ENCODE measurements at regions of chr12 and their contacts with region 1.

Region 1: GRCh38 chr12:121550974-121551634 is 29.7 kb downstream of the KDM2B start:
- DNase-seq: no peak
- ATAC-seq: no peak
- H3K4me3 Mint-ChIP-seq: no peak overlapping the region
- H3K27ac Mint-ChIP-seq: no peak overlapping the region
- H3K4me1 Mint-ChIP-seq: peaks cover 24% of the 10 kb centered on the region
- H3K27me3 Mint-ChIP-seq: no peaks in the 10 kb centered on the region
- CTCF ChIP-seq: no peak

Region 2: DNA sequence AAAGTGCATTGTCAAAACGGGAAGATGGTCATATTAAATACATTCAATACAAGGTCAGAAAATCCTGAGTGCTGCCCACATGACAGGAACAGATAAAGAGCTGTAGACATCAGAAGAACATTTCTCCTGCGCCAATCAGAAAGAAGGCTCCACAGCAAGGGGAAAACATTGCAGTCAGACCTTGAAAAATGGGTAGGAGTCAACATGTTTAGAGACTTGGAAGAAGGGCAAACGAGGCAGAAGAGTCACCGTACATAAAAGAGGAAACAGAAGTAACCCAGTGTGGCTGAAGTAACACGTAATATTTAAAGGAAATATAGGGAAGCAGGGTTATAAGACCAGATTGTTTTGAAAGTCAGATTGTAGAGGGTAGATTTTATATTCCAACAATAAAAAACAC is 658.8 kb before region 1 on chr12:
- CTCF ChIA-PET with region 1: no interaction called
- POLR2A ChIA-PET with region 1: no interaction called
- intact Hi-C with region 1: no loop called
- DNase-seq: no peak
- ATAC-seq: no peak
- H3K4me3 Mint-ChIP-seq: no peak overlapping the region
- H3K27ac Mint-ChIP-seq: peak overlapping the region; percentile 47
- H3K4me1 Mint-ChIP-seq: peaks cover 42% of the 10 kb centered on the region
- H3K27me3 Mint-ChIP-seq: no peaks in the 10 kb centered on the region
- CTCF ChIP-seq: no peak

Region 3: GRCh38 chr12:121579981-121580868 is 29.1 kb after region 1 on chr12:
- CTCF ChIA-PET with region 1: interaction called, 12 read pairs
- POLR2A ChIA-PET with region 1: interaction called, 232 read pairs
- intact Hi-C with region 1: no loop called
- DNase-seq: peak; percentile 60
- ATAC-seq: peak; percentile 52
- H3K4me3 Mint-ChIP-seq: peak overlapping the region; percentile 95
- H3K27ac Mint-ChIP-seq: peak overlapping the region; percentile 95
- H3K4me1 Mint-ChIP-seq: peaks cover 45% of the 10 kb centered on the region
- H3K27me3 Mint-ChIP-seq: no peaks in the 10 kb centered on the region
- CTCF ChIP-seq: no peak

Region 4: GRCh38 chr12:121668750-121669520 is 117.8 kb after region 1 on chr12:
- CTCF ChIA-PET with region 1: interaction called, 158 read pairs
- POLR2A ChIA-PET with region 1: interaction called, 50 read pairs
- intact Hi-C with region 1: loop called (anchors 1 kb)
- DNase-seq: peak; percentile 38
- ATAC-seq: no peak
- H3K4me3 Mint-ChIP-seq: no peak overlapping the region
- H3K27ac Mint-ChIP-seq: peak overlapping the region; percentile 14
- H3K4me1 Mint-ChIP-seq: peaks cover 49% of the 10 kb centered on the region
- H3K27me3 Mint-ChIP-seq: no peaks in the 10 kb centered on the region
- CTCF ChIP-seq: no peak

Region 5: DNA sequence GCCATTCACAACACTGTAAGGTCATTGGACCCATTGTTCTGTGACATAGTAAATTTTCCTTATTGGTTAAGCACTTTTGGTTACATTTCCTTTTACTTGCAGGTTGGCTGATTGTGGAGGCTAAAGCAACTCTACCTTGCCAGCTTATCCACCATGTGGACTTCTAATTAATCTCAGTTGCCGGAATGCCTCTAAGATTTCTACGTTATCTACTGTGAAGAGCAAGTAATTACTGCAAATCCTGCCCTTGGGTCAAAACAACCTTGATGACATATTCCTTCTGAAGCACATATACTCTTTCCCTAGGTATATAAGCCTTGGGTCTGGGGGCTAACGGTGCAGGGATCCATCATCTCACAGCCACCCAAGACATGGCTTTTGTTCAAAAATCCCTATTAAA is 137.9 kb after region 1 on chr12:
- CTCF ChIA-PET with region 1: interaction called, 71 read pairs
- POLR2A ChIA-PET with region 1: interaction called, 10 read pairs
- intact Hi-C with region 1: no loop called
- DNase-seq: no peak
- ATAC-seq: no peak
- H3K4me3 Mint-ChIP-seq: no peak overlapping the region
- H3K27ac Mint-ChIP-seq: no peak overlapping the region
- H3K4me1 Mint-ChIP-seq: peaks cover 7% of the 10 kb centered on the region
- H3K27me3 Mint-ChIP-seq: no peaks in the 10 kb centered on the region
- CTCF ChIP-seq: no peak

Region 6: GRCh38 chr12:121729021-121729420 is 177.9 kb after region 1 on chr12:
- CTCF ChIA-PET with region 1: no interaction called
- POLR2A ChIA-PET with region 1: no interaction called
- intact Hi-C with region 1: no loop called
- DNase-seq: no peak
- ATAC-seq: no peak
- H3K4me3 Mint-ChIP-seq: no peak overlapping the region
- H3K27ac Mint-ChIP-seq: no peak overlapping the region
- H3K4me1 Mint-ChIP-seq: no peaks in the 10 kb centered on the region
- H3K27me3 Mint-ChIP-seq: no peaks in the 10 kb centered on the region
- CTCF ChIP-seq: no peak

Region 7: DNA sequence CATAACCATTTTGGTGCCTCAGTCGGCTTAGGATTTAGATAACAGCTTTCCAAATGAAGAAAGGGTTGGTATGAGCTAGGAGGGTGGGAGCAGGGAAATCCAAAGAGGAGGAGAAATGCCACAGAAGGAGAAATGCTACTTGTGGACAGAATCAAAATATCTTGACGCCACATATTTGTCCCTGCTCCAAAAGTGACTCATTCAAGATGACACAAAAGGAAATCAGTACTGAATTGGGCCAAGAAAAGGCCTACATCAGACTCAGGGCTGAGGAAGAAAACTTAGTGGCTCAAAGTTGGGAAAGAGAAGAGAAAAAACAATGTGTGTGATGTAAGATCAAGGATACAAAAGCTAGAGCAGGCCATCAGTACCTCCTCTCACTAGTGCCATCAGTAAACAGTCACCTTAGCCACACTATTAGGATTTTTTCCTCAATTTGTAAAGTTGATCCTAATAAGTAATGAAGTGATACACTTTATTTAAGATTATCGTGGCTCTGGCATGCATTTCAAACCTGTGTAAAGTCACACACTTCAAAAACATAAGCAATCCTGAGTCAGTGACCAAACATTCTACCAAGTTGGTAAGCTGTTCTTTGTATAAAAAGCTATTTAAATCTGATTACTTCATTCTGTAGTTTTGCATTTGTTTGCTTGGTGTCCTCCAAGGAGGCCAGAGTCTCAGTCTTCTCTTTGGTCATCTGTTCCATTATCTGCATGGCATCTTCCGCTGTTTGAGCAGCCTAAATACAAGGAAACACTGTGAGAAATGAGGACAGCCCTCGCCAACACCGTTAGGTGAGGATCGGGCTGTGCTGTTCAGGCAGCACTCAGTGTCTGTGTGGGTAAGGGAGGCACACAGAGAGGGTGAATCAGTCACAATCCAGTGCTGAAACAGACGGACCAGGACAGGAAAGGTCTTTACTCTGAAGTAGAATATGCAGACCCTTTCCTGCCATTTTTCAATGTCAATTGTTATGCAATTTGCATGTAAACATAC is 767.8 kb after region 1 on chr12:
- CTCF ChIA-PET with region 1: no interaction called
- POLR2A ChIA-PET with region 1: no interaction called
- intact Hi-C with region 1: no loop called
- DNase-seq: no peak
- ATAC-seq: no peak
- H3K4me3 Mint-ChIP-seq: no peak overlapping the region
- H3K27ac Mint-ChIP-seq: no peak overlapping the region
- H3K4me1 Mint-ChIP-seq: no peaks in the 10 kb centered on the region
- H3K27me3 Mint-ChIP-seq: no peaks in the 10 kb centered on the region
- CTCF ChIP-seq: no peak